ENCODE measurements at regions of chr4 and their contacts with region 1.

Region 1: GRCh38 chr4:185859111-185859510 is 47.1 kb upstream of the SORBS2 start:
- DNase-seq: no peak
- H3K4me3 Mint-ChIP-seq: no peak overlapping the region
- H3K27ac Mint-ChIP-seq: peak overlapping the region; percentile 31
- H3K4me1 Mint-ChIP-seq: peaks cover 48% of the 10 kb centered on the region
- H3K27me3 Mint-ChIP-seq: no peaks in the 10 kb centered on the region
- CTCF ChIP-seq: no peak

Region 2: DNA sequence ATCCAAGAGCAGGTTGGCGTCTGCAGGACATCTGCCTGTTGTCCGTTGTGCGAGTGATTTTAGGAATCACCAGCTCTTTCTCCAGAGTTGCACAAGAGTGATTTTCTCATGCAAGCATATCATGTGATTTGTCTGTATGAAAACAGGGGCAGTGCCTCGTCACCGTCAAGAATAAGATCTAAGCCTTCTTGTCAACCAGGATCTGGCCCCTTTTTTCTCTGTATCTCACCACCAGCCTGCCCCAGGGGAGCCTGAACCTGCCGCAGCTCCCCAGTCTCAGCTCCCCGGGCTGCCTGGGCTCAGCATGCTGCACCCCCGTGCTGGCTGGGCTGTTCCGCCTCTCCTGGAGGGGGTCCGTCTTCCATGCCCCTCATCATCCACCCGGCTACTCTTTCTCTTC is 1863.5 kb before region 1 on chr4:
- CTCF ChIA-PET with region 1: interaction called, 10 read pairs
- intact Hi-C with region 1: no loop called
- DNase-seq: no peak
- H3K4me3 Mint-ChIP-seq: no peak overlapping the region
- H3K27ac Mint-ChIP-seq: no peak overlapping the region
- H3K4me1 Mint-ChIP-seq: peaks cover 6% of the 10 kb centered on the region
- H3K27me3 Mint-ChIP-seq: no peaks in the 10 kb centered on the region
- CTCF ChIP-seq: no peak

Region 3: DNA sequence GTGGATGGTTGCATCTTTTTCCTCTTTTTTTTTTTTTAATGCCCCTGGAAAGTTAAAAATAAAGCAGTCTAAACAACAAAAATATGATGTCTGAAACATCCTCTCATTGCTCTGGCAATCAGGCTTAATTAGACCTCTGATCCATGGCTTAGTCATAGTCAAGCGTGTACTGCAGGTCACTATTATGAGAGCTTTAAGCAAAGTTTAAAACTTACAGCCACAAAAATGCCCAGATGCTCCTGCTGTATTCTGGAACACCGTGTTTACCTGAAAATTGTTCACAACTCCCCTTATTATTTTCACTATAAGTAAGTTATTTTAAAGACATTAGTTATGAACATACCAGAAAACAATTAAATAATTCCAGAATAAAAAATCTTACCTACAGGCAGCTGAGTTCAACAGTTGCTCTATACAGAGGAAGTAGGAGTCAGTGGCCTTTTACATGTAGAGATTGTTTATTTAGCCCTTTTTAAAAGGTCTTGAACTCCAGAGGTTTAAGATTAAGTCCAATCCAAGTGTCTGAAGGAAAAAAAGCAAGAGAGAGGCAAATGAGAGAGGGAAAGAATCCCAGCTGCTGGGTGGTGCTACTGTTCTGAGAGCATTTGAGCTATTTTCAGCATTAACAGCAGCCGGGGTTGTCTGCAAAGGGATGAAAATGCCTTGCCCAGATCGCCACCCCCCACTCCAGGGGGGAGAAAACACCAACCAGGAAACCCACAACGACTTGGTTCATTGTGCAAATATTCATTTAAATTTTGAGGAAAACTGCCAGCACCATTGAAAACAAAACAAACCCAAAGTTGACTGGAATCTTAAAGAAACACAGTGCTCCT is 84.0 kb before region 1 on chr4:
- CTCF ChIA-PET with region 1: no interaction called
- intact Hi-C with region 1: no loop called
- DNase-seq: peak; percentile 49
- H3K4me3 Mint-ChIP-seq: peak overlapping the region; percentile 8
- H3K27ac Mint-ChIP-seq: peak overlapping the region; percentile 51
- H3K4me1 Mint-ChIP-seq: peaks cover 28% of the 10 kb centered on the region
- H3K27me3 Mint-ChIP-seq: no peaks in the 10 kb centered on the region
- CTCF ChIP-seq: no peak

Region 4: GRCh38 chr4:185997296-185997695 is 138.2 kb after region 1 on chr4:
- CTCF ChIA-PET with region 1: no interaction called
- intact Hi-C with region 1: no loop called
- DNase-seq: no peak
- H3K4me3 Mint-ChIP-seq: no peak overlapping the region
- H3K27ac Mint-ChIP-seq: no peak overlapping the region
- H3K4me1 Mint-ChIP-seq: no peaks in the 10 kb centered on the region
- H3K27me3 Mint-ChIP-seq: no peaks in the 10 kb centered on the region
- CTCF ChIP-seq: no peak